Breast epithelium (tissue), 4 donors: ENCODE measurements at regions of chr10 and their contacts with region 1.

Region 1: DNA sequence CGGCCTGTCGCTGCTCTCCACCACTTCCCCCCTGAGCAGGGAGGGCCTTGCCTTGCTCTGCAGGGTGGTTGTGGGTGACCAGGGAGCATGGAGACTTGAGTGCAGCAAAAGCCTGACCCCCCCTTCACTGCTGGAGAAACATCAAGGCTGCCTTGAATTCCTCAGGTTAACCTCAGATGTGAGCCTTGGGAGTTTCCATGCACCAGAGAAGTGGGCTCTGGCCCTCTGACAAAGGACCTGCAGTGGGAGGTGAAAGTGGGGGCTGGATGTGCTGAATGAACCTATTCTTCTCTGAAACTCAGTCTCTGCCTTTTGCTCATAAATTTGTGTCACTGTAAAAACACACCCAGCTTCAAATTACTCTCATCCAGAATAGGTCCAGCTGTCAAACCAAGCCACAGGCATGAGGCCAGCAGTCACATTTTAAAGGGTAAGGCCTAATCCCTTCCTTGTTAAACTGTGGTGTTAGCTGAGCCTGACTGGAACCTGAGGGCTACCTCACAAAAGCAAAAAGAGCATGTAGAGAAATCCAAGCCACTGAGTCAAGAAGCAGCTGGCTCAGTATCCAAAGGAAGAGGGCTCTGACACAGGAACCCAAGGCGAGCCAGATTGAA is 356.8 kb downstream of the CCSER2 start:
- DNase-seq: no peak
- H3K4me3 ChIP-seq: no peak overlapping the region
- H3K27ac ChIP-seq: no peak overlapping the region
- H3K4me1 ChIP-seq: no peaks in the 10 kb centered on the region
- H3K27me3 ChIP-seq: no peaks in the 10 kb centered on the region
- CTCF ChIP-seq: no peak
- POLR2A ChIP-seq: no peak

Region 2: GRCh38 chr10:86017841-86018734 is 1332.9 kb after region 1 on chr10:
- intact Hi-C with region 1: loop called (anchors 10 kb)
- DNase-seq: no peak
- H3K4me3 ChIP-seq: no peak overlapping the region
- H3K27ac ChIP-seq: no peak overlapping the region
- H3K4me1 ChIP-seq: no peaks in the 10 kb centered on the region
- H3K27me3 ChIP-seq: no peaks in the 10 kb centered on the region
- CTCF ChIP-seq: no peak
- POLR2A ChIP-seq: no peak